ENCODE measurements at regions of chr7 and their contacts with region 1.

Region 1: DNA sequence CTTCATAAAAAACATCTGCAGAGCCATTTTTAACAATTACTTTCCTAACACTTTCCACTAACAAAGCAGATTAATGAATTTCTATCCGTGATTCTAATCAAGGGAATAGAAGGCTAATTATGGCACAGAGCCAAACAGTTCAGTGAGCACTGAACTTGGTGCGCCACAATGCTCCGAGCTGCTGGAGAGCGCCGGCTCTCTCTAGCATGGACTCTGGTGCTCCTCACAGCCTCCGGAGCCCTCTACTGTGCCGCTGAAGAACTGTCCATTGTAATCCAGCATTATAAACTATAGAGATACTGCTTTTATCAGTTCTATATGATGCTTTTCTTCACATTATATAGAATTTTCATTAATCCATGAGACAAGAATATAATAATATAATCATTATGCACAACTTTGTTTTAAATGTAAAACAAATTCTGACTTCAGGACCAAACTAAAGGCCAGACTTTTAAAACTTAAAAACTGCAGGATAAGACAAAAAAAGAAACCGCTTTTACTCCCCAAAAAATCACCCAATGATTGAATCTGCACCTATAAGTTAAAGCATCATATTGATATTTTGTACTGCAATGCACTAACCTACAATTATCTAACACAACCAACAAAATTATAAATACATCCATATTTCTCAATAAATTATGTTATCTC is 123.6 kb downstream of the RNF32 start:
- DNase-seq: peak; percentile 74
- H3K4me3 ChIP-seq: no peak overlapping the region
- H3K27ac ChIP-seq: no peak overlapping the region
- H3K4me1 ChIP-seq: no peaks in the 10 kb centered on the region
- H3K27me3 ChIP-seq: no peaks in the 10 kb centered on the region
- CTCF ChIP-seq: peak; percentile 61 to 65
- POLR2A ChIP-seq: no peak

Region 2: GRCh38 chr7:155796381-155797261 is 967.5 kb before region 1 on chr7:
- CTCF ChIA-PET with region 1: interaction called, 10 read pairs
- POLR2A ChIA-PET with region 1: no interaction called
- dilution Hi-C with region 1: no loop called
- intact Hi-C with region 1: loop called (anchors 1 kb)
- DNase-seq: no peak
- H3K4me3 ChIP-seq: no peak overlapping the region
- H3K27ac ChIP-seq: no peak overlapping the region
- H3K4me1 ChIP-seq: no peaks in the 10 kb centered on the region
- H3K27me3 ChIP-seq: peaks cover 6 to 11% of the 10 kb centered on the region in 2 experiments
- CTCF ChIP-seq: peak; percentile 63 to 97
- POLR2A ChIP-seq: no peak

Region 3: DNA sequence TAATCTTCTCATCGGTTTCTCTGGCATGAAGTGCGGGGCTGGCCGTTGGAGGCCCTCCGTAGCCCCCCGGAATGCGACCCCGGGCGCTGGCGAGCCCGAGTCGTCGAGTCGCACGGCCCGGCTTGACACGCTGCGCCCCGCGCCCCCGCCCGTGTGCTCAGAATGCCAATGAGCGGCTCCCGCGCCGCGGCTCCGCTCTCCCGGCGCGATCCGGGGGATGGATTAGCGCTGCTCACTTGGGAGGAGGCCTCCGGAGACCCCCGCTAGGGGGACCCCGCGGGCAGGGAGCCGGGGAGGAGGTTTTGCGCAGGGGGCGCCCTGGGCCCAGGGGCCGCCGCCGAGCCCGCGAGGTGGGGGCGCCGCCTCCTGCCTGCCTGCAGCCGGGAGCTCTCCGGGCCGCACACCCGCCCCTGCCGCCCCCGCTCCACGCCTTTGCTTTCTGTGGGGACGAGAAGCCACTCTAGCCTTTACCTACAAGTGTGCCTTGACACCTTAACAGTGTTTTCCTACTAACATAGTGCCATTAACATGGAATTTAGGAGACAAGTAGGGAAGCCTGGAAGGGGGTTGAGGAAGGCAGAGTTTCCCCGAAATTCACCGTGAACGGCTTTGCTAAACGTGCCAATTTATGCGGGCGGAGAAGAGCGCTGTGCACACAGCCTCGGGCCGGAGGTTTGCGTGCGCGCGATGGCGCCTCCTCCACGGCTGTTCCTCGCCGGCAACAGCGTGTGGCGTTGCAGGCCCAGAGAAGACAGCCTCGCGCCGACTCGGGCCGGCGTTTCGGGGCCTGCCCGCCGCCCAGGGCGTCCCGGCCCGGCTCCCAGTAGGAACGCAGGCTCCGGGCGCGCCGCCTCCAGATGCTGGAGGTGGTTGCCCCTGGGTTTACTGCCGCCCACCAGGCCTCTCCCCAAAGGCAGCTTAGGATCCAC is 959.0 kb before region 1 on chr7:
- CTCF ChIA-PET with region 1: interaction called, 4 read pairs
- POLR2A ChIA-PET with region 1: no interaction called
- dilution Hi-C with region 1: no loop called
- intact Hi-C with region 1: loop called (anchors 1 kb)
- DNase-seq: peak; percentile 69
- H3K4me3 ChIP-seq: peak overlapping the region; percentile 12 to 56 (median 31)
- H3K27ac ChIP-seq: no peak overlapping the region
- H3K4me1 ChIP-seq: peaks cover 29% of the 10 kb centered on the region
- H3K27me3 ChIP-seq: peaks cover 14 to 58% of the 10 kb centered on the region in 2 experiments
- CTCF ChIP-seq: peak; percentile 50 to 80
- POLR2A ChIP-seq: no peak

Region 4: DNA sequence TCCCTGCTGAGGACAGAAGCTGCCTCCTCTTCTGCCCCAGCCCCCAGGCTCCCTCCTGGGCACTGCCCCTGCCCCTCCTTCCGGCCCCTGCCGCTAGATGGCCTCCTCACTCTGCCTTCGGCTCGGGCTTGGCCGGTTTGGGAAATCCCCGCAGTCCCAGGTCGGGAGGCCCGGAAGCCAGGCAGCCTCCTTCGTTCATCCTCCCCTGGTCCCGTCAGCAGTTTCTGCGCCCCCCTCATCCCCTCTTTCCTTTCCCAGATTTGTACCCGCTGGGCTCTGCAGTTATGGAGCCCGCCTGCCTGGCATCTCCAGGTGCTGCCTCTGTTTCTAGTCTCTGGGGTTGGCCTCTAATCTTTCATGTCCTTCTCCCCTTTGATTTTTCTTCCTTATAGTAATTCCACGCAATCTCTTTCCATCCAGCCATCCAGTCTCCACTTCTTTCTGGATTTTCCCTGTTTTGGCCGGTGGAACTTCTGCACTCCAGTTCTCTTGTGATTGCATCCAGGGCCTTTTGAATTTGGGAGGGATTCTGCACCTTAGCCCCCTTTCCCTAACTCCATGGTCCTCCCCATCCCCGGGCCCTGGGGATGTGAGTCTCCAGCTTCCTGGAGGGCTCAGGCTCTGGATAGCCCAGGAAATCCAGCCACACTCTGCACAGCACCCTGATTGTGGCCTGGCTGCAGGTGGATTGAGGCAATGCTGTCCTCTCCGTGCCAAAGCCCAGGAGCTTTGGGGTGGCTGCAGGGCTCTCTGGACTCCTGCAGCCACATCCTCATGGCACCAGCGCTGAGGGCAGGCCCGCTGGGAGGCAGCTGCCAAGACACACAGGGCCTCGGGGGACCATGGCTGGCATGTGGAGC is 948.6 kb before region 1 on chr7:
- CTCF ChIA-PET with region 1: interaction called, 4 read pairs
- POLR2A ChIA-PET with region 1: no interaction called
- dilution Hi-C with region 1: no loop called
- intact Hi-C with region 1: loop called (anchors 1 kb)
- DNase-seq: peak; percentile 34
- H3K4me3 ChIP-seq: no peak overlapping the region
- H3K27ac ChIP-seq: no peak overlapping the region
- H3K4me1 ChIP-seq: peaks cover 6% of the 10 kb centered on the region
- H3K27me3 ChIP-seq: peaks cover 34 to 42% of the 10 kb centered on the region in 2 experiments
- CTCF ChIP-seq: peak; percentile 31 to 88
- POLR2A ChIP-seq: no peak

Region 5: DNA sequence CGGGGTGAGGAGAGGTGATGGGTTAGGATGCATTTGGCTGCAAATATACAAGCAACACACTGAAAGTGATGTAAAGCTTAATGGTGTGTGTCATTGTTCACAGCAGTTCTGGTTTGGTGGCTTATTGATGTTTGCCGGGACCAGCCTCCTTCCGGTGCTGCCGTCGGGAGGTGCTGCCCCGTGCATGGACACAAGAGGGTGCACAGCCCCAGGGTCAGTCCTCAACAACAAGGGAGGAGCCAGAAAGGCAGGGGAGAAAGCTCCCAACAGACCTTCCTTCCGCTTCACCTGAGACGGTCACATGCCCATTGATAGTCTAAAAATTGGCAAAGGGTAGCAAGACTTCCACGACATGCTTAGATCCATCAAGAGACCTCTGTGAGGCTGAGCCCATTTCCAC is 114.1 kb before region 1 on chr7:
- CTCF ChIA-PET with region 1: interaction called, 6 read pairs
- POLR2A ChIA-PET with region 1: no interaction called
- dilution Hi-C with region 1: no loop called
- intact Hi-C with region 1: loop called (anchors 2 kb)
- DNase-seq: no peak
- H3K4me3 ChIP-seq: no peak overlapping the region
- H3K27ac ChIP-seq: no peak overlapping the region
- H3K4me1 ChIP-seq: no peaks in the 10 kb centered on the region
- H3K27me3 ChIP-seq: peaks cover 2 to 6% of the 10 kb centered on the region in 2 experiments
- CTCF ChIP-seq: peak; percentile 16 to 28
- POLR2A ChIP-seq: no peak

Region 6: DNA sequence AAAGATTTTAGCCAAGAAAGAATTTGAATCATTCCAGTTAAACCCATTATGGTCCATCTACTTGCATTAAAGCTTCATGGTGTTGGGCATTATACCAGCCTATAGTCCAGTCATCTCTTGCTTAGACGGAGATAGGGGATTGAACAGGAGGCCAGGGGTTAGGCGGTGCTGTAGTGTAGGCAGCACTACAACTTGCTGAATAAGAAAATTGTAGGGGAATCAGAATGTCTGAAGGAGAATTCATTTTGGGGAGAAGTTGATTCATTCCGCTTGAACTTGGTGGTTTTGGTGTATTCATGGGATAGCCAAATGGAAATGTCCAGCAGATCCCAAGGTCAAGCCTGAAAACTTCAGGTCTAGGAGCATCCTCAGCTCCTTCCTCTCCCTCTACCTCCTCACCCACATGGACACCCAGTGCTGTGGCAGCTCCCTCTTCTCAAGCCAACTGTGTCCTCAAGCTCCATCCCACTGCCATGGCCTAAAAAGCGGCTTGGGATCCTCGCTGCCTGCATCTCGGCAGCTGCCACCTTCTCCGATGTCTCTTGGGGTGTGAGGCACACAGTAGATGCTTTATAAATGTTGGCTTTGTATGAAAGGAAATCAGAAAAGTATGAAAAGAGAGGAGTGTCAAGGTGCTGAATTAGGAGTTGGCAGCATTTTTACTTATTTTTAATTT is 309.9 kb after region 1 on chr7:
- CTCF ChIA-PET with region 1: no interaction called
- POLR2A ChIA-PET with region 1: no interaction called
- dilution Hi-C with region 1: no loop called
- intact Hi-C with region 1: no loop called
- DNase-seq: no peak
- H3K4me3 ChIP-seq: no peak overlapping the region
- H3K27ac ChIP-seq: no peak overlapping the region
- H3K4me1 ChIP-seq: no peaks in the 10 kb centered on the region
- H3K27me3 ChIP-seq: peaks cover 13 to 16% of the 10 kb centered on the region in 2 experiments
- CTCF ChIP-seq: no peak
- POLR2A ChIP-seq: no peak